PC-9 (cell line): ENCODE measurements at regions of chr5 and their contacts with region 1.

Region 1: DNA sequence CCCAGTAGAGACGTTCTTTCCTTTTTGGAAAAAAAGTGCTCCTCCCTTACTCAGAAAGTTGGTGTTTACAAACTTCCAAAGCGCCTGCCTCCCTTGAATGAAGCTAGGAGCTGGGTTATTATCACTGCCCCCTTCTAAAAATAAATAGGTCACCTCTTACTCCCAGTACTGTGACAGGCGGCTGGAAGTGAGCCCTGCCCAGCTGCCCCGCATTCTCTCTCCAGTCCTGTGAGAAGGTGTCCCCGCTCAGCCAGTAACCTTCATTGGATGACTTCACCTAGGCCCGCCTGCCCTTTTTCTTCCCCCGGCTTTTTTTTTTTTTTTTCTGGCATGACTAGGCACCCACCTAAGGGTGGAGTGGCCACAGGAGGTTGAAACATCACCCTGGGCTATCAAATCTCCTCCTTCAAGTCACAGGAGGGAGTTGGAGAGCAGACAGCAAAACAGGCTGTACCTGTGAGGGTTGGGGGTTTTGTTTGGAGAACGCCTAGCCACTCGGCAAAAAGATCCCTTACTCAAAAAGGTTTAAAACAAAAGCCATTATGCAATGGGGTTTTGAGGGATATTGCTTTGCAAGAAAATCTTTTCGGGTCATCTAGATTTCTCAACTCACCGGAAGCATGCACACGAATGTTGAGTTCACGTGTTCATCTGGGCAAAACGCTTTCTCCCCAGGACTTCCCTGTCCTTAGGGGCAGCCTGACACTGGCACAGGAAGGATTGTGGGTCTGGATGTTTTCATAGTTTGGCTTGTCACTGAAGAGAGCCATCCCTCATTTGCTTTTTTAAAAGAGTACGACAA is 43.3 kb upstream of the ZNF622 start:
- DNase-seq: peak; percentile 96 to 97
- H3K4me3 ChIP-seq: peak overlapping the region; percentile 53
- H3K27ac ChIP-seq: peak overlapping the region; percentile 82
- H3K4me1 ChIP-seq: peaks cover 26% of the 10 kb centered on the region
- H3K27me3 ChIP-seq: no peaks in the 10 kb centered on the region
- CTCF ChIP-seq: no peak

Region 2: DNA sequence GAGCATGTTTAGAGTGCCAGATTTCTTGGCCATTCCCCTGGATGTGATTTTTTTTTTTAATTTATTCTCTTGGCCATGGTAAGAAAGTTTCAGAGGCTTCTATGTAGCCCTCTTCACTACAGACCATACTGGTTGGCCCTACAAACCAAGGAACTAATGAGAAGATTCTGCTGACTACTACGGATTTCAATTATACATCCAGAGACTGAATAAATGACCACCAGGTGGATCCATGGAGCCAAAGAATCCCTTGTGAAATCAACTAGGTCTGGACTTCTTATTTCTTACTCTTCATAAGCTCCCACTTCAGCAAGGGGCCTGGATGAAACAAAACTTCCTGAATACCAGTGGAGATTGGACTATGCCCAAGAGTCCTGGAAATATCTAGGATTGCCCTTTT is 71.0 kb before region 1 on chr5:
- CTCF ChIA-PET with region 1: interaction called, 14 read pairs
- POLR2A ChIA-PET with region 1: no interaction called
- intact Hi-C with region 1: no loop called
- DNase-seq: no peak
- H3K4me3 ChIP-seq: no peak overlapping the region
- H3K27ac ChIP-seq: no peak overlapping the region
- H3K4me1 ChIP-seq: no peaks in the 10 kb centered on the region
- H3K27me3 ChIP-seq: peaks cover 48% of the 10 kb centered on the region
- CTCF ChIP-seq: peak; percentile 55; the same call in 1 of the 2 replicates

Region 3: DNA sequence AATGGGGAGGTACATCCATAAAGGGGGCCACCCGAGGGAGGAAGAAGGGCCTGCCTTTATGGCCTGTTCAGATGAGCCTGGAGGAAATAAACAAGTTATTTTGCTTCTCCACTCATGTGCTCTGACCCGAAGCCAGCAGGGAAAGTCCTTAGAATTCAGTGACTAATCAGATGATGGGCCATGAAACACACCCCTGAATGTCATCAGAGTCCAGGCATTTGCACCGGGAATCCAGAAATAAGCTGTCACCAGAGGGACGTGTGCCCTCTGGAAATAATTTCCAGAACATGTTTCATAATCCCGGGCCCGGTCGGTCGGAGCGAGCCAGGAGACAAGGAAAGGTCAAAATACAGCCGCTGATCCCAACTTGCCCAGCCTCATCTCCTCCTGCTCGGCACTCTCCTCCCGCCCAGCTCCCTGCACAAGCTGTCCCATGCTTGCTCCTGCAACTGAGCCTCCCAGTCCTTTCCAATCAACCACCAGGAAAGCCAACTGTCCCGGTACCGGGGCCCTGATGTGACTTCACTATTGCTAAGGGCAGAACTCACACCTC is 30.3 kb after region 1 on chr5:
- CTCF ChIA-PET with region 1: interaction called, 4 read pairs
- POLR2A ChIA-PET with region 1: interaction called, 6 read pairs
- intact Hi-C with region 1: loop called (anchors 2 kb)
- DNase-seq: peak; percentile 69 to 82
- H3K4me3 ChIP-seq: no peak overlapping the region
- H3K27ac ChIP-seq: peak overlapping the region; percentile 47
- H3K4me1 ChIP-seq: peaks cover 24% of the 10 kb centered on the region
- H3K27me3 ChIP-seq: no peaks in the 10 kb centered on the region
- CTCF ChIP-seq: no peak

Region 4: DNA sequence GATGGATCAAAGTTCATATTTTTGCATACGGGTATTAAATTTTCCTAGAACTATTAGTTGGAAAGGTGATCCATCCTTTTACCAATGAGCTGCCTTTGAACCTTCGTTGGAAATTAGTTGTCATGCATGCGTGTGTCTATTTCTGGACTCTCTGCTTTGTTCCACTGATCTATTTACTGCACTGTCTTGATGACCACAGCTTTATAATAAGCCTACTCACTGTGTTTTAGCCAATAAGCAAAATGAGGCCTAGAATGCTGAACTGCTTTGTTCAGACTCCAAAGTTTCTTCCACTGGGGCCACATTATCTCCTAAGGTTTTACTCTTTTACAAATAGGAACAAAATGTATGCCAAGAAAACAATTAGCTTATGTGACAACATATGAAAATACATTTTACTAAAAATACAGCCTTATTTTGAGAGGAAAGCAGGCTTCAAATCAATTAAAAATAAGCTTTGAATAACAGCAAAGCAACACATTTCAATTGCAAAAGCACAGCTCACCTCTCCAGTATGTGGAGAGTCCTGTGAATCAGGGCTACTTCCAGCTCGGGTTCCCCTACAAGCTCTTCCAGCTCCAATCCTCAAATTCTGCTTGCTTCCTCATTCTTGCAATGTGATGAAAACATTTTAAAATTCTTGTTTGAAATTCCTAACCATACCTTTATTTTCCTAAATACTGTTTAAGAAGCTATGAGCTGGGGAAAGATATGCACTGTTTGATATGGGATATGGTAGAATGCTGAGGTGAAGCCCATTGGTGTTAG is 35.9 kb after region 1 on chr5:
- CTCF ChIA-PET with region 1: no interaction called
- POLR2A ChIA-PET with region 1: interaction called, 13 read pairs
- intact Hi-C with region 1: loop called (anchors 1 kb)
- DNase-seq: peak; percentile 53 to 82
- H3K4me3 ChIP-seq: no peak overlapping the region
- H3K27ac ChIP-seq: peak overlapping the region; percentile 57
- H3K4me1 ChIP-seq: peaks cover 16% of the 10 kb centered on the region
- H3K27me3 ChIP-seq: no peaks in the 10 kb centered on the region
- CTCF ChIP-seq: no peak

Region 5: GRCh38 chr5:16552666-16553343 is 43.9 kb after region 1 on chr5:
- CTCF ChIA-PET with region 1: interaction called, 4 read pairs
- POLR2A ChIA-PET with region 1: no interaction called
- intact Hi-C with region 1: loop called (anchors 1 kb)
- DNase-seq: peak; percentile 68 to 87
- H3K4me3 ChIP-seq: no peak overlapping the region
- H3K27ac ChIP-seq: no peak overlapping the region
- H3K4me1 ChIP-seq: no peaks in the 10 kb centered on the region
- H3K27me3 ChIP-seq: no peaks in the 10 kb centered on the region
- CTCF ChIP-seq: peak; percentile 86

Region 6: GRCh38 chr5:16674750-16675149 is 165.8 kb after region 1 on chr5:
- CTCF ChIA-PET with region 1: no interaction called
- POLR2A ChIA-PET with region 1: interaction called, 16 read pairs
- intact Hi-C with region 1: no loop called
- DNase-seq: no peak
- H3K4me3 ChIP-seq: no peak overlapping the region
- H3K27ac ChIP-seq: no peak overlapping the region
- H3K4me1 ChIP-seq: no peaks in the 10 kb centered on the region
- H3K27me3 ChIP-seq: no peaks in the 10 kb centered on the region
- CTCF ChIP-seq: no peak

Region 7: DNA sequence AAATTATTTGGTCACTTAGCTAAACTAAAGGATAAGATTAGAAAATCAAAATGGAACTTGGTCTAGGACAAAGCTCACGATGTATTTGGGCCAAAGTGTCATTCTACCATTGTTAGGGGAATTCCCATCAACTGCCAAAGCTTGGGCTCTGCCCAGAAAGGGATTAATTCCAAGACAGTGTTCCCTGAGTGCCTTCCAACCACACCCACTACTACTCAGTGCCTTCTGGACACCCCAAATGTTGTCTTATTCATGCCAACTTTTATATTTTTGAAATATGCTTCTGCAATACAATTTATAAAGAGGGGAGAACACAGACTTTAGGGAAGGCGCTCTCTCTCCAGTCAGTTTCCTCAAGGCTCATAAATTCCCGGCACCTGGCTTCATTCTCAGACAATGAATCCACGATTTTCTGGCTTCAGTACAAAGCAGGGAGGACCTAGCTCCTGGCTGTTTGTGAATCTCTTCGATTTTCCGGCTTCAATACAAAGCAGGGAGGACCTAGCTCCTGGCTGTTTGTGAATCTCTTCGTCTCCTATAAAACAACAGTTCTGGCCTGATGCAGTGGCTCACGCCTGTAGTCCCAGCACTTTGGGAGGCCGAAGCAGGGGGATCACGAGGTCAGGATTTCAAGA is 547.2 kb after region 1 on chr5:
- CTCF ChIA-PET with region 1: no interaction called
- POLR2A ChIA-PET with region 1: interaction called, 14 read pairs
- intact Hi-C with region 1: no loop called
- DNase-seq: peak; percentile 5 to 49
- H3K4me3 ChIP-seq: no peak overlapping the region
- H3K27ac ChIP-seq: no peak overlapping the region
- H3K4me1 ChIP-seq: peaks cover 34% of the 10 kb centered on the region
- H3K27me3 ChIP-seq: no peaks in the 10 kb centered on the region
- CTCF ChIP-seq: no peak